Caco-2 (cell line): ENCODE measurements at regions of chr21 and their contacts with region 1.

Region 1: DNA sequence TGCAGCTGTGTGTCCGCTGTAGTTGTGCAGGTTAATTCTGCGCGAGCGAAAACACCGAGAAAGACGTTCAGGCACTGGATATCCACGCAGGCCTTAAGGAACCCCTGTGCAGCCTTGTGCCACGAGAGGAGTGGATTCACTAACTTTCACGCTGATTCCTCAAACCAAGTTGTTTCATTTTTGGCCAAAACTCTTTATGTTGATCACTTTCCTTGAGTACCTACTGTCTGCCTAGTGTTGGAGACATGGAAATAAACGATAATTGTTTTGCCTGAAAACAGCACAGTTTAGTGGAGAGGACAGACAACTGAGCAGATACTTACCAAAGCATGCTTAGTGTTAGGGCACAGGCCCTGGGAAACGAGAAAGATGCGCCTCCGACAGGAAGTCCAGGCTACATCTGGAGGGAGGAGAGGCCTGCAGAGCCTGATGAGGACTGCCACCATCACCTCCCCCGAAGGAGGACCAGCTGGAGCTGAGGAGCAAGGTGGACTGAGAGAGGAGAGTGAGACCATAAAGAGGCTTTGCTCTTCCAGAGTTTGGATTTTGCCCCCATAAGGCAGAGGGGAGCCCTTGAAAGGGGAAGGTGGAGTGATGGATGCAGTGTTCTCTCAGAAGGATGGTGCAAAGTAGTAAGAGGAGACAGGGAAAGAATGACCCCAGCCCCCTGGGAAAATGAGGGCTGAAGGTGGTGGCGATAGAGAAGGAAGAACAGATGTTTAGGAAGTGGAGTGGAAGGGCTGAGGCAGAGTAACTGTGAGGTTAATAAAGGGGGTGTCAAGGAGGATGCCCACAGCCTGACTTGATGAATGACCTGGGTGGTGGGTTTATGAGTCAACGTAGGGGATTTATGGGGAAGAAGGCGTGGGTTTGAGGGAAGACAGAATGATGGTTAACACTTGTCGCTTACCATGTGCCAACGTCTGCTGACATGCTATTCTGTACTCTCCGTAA is 956 bp upstream of the SCAF4 start:
- DNase-seq: peak in 1 of 2 experiments; percentile 23
- H3K4me3 ChIP-seq: peak overlapping the region; percentile 61
- H3K4me3 Mint-ChIP-seq: no peak overlapping the region
- H3K27ac Mint-ChIP-seq: no peak overlapping the region
- H3K4me1 ChIP-seq: peaks cover 12% of the 10 kb centered on the region; the same call in 1 of the 2 replicates
- H3K4me1 Mint-ChIP-seq: no peaks in the 10 kb centered on the region
- H3K27me3 ChIP-seq: no peaks in the 10 kb centered on the region
- H3K27me3 Mint-ChIP-seq: no peaks in the 10 kb centered on the region
- CTCF ChIP-seq: no peak

Region 2: DNA sequence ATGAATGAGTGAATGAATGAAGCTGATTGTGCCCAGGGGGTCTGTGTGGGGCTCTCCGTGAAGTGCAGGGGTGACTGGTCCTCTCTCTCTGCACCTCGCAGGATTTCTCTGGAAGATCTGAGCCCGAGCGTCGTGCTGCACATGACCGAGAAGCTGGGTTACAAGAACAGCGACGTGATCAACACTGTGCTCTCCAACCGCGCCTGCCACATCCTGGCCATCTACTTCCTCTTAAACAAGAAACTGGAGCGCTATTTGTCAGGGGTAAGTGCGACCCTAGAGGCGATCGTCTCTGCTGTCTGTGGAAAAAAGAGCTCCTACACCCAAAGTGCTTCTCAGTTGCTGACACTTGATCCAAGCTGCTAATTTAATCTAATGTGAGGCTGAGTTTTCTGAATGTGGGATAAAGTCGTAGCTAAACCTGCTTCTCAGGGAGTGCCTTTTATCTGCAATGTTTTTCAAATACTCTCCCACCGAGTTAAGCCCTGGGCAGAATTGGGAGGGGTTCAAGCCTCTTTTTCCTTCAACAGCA is 241.6 kb after region 1 on chr21:
- CTCF ChIA-PET with region 1: no interaction called
- POLR2A ChIA-PET with region 1: interaction called, 11 read pairs
- intact Hi-C with region 1: no loop called
- DNase-seq: no peak
- H3K4me3 ChIP-seq: no peak overlapping the region
- H3K4me3 Mint-ChIP-seq: no peak overlapping the region
- H3K27ac Mint-ChIP-seq: no peak overlapping the region
- H3K4me1 ChIP-seq: no peaks in the 10 kb centered on the region
- H3K4me1 Mint-ChIP-seq: no peaks in the 10 kb centered on the region
- H3K27me3 ChIP-seq: no peaks in the 10 kb centered on the region
- H3K27me3 Mint-ChIP-seq: no peaks in the 10 kb centered on the region
- CTCF ChIP-seq: no peak